Posterior vena cava (tissue), 2 donors: ENCODE measurements at regions of chr1 and their contacts with region 1.

Region 1: GRCh38 chr1:10724948-10725847 is 71.2 kb downstream of the CASZ1 start:
- DNase-seq: no peak

Region 2: DNA sequence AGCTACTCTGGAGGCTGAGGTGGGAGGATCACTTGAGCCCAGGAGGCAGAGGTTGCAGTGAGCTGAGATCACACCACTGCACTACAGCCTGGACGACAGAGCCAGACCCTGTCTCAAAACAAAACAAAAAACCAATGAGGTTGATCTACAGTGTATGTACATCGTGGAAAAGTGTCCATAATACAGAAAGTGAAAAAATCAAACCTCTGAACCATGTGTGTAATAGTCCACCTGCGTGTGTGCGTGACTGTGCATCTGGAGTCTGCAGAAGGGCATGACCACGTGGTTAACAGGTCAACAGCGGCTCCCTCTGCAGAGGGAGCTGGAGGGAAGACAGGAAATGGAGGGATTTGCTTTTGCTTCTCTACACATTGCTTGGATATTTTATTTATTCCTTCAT is 1814.3 kb before region 1 on chr1:
- intact Hi-C with region 1: loop called in 1 of 2 experiments (anchors 5 kb)
- DNase-seq: no peak

Region 3: DNA sequence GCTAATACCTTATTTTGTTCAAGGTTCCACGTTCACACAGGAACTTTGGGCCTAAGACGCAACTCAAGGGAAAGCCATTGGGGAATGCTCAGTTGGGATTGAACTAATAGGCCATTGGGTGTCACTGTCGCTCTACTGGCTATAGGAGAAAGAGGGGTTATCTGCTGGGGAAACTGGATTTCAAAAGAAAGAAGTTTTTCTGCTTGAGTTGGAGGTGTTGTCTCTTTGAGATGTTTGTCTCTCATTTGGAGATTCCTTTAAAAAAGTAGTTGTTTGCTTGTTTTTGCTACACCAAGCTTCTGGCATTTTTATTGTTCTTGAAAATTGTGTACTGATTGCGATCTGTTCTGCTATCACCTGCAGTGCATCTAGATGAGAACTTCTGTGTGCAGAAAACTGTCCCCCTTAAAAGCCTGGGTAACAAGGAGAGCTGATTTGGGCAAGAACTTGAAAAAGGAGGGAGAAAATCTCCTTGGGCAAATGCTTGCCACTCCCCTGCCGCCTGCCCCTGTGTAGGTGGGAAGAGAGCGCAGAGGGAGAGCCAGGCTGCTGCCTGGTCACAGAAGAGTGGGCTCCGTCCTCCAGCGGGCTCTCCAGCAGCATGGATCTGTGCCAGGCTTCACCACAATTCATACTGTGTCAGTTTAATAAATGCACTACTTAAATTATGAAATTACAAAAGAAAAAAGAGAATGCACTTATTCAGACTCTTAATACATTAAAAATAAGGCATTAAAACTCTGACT is 210.5 kb before region 1 on chr1:
- intact Hi-C with region 1: no loop called
- DNase-seq: no peak

Region 4: DNA sequence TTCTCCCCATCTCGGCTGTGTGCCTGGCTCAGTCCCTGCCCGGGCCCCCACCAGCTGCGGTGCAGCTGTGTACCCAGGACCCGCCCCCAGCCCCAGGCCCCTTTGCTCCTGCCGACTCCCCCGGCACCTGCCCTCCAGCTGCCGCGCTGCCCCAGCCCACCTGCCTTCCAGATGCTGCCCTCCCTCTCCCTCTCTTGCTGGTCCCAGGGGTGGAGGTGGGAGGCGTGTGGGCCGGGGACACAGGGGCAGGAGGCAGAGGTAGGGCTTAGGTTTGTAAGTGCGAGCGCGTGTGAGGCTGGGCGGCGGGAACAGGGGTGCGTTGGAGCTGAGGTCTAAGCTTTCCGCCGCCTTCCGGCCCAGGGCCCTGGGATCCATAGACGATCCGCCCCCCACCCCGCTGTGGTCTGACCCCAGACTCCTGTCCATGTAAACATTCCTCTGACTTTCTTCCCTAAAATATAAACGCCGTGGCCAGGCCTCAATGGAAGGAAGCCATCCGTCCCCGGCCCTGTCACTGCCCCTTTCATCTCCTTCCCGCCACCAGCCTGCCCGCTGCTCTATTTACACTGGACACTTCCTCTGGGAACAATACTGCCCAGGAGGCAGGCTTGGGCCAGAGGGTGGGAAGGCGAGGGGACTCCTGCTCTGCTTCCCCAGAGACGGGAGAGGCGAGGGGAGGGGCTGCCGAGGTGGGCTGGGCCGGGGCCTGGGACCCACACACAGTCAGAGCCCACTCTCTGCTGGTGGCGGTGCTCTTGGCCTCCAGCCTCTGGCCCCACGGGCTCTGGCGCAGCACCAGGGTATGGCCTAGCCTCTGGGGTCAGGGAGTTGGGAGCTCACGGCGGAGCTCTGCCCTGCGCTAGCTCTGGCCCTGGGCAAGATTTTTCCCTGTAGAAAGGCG is 57.1 kb before region 1 on chr1:
- intact Hi-C with region 1: no loop called
- DNase-seq: no peak

Region 5: DNA sequence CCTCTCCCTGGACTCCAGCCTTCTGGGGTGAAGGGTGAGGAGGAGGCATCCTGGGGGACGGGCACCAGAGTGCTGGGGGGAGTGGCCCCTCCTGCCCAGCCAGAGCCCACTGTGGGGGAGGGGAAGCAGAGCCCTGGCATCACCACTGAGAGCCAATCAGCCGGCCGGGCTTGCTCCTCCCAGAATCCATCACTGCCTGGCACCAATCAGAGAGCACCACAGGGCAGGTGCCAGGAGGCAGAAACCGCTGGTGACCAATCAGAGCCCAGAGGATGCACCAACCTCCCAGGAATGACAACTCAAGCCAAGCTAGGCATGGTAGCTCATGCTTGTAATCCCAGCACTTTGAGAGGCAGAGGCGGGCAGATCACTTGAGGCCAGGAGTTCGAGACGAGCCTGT is 43.4 kb after region 1 on chr1:
- intact Hi-C with region 1: loop called in 1 of 2 experiments (anchors 1 kb)
- DNase-seq: no peak

Region 6: DNA sequence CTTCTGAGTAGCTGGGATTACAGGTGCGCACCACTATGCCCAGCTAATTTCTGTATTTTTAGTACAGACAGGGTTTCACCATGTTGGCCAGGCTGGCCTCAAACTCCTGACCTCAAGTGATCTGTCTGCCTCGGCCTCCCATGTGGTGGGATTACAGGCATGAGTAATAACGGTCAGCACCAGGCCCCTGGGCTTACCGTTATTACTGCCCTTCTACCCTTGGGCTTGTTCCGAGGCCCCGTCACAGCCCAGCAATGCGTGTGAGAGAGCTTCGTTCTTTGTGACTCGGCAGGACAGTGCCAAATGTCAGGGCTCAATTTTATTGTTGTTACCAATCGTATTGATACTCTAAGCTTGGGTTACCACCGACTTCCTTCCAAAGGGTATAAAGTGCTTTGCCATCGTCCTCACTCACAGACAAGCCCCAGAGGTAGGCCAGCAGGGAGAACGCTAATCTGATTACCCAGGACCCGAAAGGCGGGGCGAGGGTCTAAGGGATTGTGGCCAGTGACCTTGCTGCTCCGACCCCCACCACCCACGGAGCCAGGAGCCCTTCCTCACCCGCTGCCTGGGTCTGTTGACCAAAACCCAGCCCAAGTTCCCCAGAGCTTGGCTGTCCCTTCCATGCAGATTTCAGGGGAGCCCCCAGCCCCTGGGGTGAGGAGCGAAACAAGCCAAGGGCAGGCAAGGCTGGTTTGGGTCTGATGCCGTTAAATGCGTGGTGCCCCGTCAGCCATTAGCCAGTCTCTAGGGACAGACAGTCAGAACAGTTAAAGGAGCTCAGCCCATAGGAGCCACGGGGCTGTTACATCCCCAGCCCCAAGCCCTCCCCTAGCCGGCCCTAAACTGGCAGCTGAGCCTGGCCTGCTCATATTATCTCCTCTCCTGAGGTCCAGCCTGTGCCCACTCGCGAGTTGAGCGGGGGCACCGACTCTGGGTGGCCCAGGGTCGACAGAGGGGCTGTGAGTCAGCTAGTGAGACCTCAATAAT is 126.1 kb after region 1 on chr1:
- intact Hi-C with region 1: loop called in 1 of 2 experiments (anchors 1 kb)
- DNase-seq: no peak

Region 7: DNA sequence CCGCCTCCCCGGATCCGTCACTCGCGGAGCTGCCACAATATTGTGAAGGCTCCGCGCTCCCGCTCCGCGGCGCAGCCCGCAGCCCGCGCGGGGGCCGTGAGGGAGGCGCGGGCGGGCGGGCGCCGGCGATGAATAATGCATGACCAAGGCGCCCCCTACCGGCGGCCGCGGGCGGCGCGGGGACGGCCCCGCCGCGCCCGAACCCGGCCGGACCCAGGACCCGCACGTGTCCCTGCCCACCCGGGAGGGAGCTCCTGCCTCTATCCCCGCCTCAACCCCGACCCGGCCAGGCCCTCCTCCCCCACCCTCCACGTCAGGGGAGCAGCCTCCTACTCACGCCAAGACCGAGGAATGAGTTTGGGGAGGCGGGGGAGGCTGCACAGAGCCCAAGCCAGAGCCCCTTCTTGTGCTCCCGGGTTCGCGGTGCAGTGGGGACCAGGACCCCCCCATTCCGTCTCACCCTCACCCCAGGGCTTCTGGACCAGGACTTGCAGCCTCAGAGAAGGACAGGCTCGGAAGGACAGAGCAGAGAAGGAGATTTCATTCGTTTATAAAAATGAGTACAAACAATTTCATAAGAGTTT is 142.0 kb after region 1 on chr1:
- intact Hi-C with region 1: loop called in 1 of 2 experiments (anchors 1 kb)
- DNase-seq: no peak